MCF 10A (cell line): ENCODE measurements at regions of chr14 and their contacts with region 1.

Region 1: DNA sequence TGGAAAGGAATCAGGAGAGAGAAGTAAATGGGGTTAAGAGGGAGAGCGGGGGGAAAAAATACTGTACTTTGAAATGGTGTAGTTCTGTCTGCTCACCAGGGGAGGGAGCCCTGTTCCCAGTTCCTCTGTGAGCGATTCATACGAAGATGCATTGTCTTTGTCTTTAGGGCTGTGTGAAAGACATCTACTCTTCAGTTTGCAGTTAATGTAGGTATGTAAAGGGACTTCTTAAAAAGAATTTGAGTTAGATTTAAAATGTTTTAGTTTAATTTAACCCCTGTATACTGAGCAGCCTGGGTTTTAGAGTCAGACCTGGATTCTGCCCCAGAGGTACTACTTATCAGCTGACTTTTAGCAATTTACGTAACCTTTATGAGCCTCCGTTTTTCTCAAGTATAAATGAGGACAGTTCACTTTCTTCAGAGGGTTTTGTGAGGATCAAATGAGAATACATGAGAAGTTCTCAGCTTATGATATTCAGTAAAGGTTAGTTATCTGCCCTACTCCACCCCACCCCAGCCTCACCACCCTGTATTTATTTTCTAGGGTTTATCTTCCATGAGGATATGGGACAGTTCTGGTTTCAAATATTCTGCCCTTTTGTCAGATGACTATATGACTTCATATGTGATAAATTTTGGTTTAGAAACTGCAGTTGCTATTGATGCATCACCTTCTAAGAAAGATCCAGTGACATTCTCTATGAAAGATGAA is 82.5 kb upstream of the EVL start:
- DNase-seq: peak; percentile 74
- H3K4me3 Mint-ChIP-seq: no peak overlapping the region
- H3K27ac Mint-ChIP-seq: no peak overlapping the region
- H3K4me1 Mint-ChIP-seq: peaks cover 22% of the 10 kb centered on the region
- H3K27me3 Mint-ChIP-seq: no peaks in the 10 kb centered on the region
- CTCF ChIP-seq: peak; percentile 87

Region 2: DNA sequence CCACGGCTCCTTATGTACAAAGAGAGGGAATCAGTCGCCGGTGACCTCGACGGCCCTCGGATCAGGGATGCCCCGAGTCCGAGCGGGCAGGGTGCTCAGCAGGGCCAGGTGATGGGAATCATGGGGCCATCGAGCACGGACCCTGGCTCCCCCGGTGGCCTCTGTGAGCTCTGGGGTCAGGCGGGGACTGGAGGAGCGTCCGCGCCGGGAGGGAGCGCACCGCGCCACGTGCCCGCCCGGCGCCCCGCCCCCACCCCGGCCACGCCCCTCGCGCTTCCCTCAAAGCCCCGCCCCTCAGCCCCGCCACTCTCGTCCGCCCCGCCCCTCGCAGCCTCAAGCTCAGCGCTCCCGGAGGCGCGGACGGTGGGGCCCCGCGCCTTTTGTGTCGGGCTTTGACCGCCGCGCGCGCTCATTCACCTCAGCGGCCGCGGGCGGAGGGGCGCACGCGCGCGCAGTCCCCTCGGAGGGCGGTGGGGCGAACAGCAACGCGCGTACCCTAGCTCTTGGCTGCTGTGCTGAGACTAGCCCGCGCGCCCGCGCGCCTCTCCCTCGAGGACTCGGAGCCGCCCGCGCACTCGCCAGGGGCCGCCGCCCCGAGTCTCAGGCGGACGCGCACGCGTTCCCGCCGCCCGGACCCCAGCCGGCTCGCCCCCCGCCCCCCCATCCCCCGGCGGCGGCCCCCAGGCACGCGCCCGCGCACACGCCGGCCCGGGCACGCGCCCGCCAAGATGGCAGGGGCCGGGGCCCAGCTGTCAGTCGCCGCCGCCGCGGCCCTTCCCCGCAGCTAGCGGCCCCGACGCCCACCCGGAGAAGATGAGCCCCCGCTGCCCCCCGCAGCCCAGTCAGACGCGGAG is 11.4 kb before region 1 on chr14:
- CTCF ChIA-PET with region 1: interaction called, 4 read pairs
- POLR2A ChIA-PET with region 1: interaction called, 10 read pairs
- intact Hi-C with region 1: no loop called
- DNase-seq: peak; percentile 84
- H3K4me3 Mint-ChIP-seq: peak overlapping the region; percentile 91
- H3K27ac Mint-ChIP-seq: no peak overlapping the region
- H3K4me1 Mint-ChIP-seq: peaks cover 7% of the 10 kb centered on the region
- H3K27me3 Mint-ChIP-seq: no peaks in the 10 kb centered on the region
- CTCF ChIP-seq: no peak

Region 3: DNA sequence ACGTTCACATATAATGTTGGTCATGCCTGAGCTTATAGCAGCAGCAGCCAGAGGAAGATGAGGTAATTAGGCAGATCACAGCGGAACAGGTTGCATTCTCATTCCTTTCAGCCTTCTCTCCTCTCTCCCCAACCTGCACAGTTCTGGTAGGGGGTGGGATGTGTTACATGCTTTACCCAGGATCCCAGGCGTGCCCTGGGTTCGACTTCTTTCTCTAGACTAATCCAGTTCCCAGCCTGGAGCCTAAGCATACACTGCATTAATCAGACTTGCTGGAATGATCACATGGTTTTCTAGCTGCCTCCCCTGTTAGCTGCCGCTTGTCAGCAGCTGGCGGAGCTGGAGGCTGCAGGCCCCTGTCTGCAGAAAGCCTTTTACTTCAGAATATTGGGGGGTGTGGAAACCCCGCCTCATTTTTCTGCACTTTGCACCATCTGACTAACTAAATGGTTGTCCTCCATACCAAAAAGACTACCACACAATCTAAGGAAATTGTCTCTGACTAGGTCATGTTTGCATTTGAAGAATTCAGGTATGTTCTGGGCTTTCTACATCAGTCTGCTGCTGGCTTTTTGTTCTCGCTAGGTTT is 36.6 kb after region 1 on chr14:
- CTCF ChIA-PET with region 1: interaction called, 48 read pairs
- POLR2A ChIA-PET with region 1: no interaction called
- intact Hi-C with region 1: no loop called
- DNase-seq: no peak
- H3K4me3 Mint-ChIP-seq: no peak overlapping the region
- H3K27ac Mint-ChIP-seq: no peak overlapping the region
- H3K4me1 Mint-ChIP-seq: peaks cover 23% of the 10 kb centered on the region
- H3K27me3 Mint-ChIP-seq: no peaks in the 10 kb centered on the region
- CTCF ChIP-seq: no peak

Region 4: DNA sequence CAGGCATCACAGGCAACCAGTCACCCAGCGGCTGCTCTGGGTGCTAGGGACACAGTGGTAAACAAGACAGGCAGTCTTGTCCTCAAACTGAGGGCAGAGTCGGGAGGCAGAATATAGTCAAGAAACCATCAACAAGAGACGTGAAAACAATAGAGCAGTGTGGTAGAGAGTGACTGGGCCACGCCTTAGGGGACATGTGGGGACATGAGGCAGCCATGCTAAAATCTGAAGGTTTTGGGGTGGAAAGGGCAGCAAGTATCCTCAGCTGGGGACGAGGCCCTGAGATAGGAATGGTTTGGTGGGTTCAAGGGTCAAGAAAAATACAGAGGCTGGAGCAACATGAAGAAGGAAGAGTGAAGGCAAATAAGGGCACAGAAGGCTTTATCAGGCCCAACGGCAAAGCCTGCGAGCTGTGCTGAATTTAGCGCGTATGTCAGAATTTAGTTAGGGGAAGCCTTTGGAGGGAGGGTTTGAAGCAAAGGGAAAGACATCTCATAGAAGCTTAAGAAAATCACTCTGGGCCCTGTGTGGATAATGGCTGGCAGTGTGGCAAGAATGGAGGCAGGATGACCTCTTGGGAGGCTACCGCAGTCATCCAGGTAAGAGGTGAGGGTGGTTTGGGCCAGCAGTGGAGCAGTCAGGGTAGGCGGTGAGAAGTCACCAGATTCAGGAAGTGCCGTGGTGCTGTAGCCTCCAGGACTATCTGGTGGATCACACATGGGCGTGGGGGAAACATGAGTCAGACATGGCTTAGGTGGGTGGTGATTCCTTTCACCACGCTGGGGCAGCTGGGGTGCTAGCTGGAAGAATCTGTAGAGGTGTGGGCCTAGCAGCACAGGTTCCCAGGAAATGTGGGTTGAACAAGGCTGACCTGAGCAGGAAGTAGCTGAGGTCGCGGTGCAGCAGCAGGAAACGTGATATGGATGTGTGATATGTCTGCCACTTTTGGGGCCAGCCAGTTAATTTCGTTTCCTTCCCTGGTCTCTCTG is 85.6 kb after region 1 on chr14:
- CTCF ChIA-PET with region 1: interaction called, 21 read pairs
- POLR2A ChIA-PET with region 1: interaction called, 3 read pairs
- intact Hi-C with region 1: loop called (anchors 1 kb)
- DNase-seq: peak; percentile 73
- H3K4me3 Mint-ChIP-seq: no peak overlapping the region
- H3K27ac Mint-ChIP-seq: peak overlapping the region; percentile 78
- H3K4me1 Mint-ChIP-seq: peaks cover 29% of the 10 kb centered on the region
- H3K27me3 Mint-ChIP-seq: no peaks in the 10 kb centered on the region
- CTCF ChIP-seq: no peak

Region 5: GRCh38 chr14:100108042-100108825 is 125.5 kb after region 1 on chr14:
- CTCF ChIA-PET with region 1: interaction called, 89 read pairs
- POLR2A ChIA-PET with region 1: interaction called, 5 read pairs
- intact Hi-C with region 1: loop called (anchors 1 kb)
- DNase-seq: peak; percentile 81
- H3K4me3 Mint-ChIP-seq: peak overlapping the region; percentile 18
- H3K27ac Mint-ChIP-seq: peak overlapping the region; percentile 70
- H3K4me1 Mint-ChIP-seq: peaks cover 41% of the 10 kb centered on the region
- H3K27me3 Mint-ChIP-seq: no peaks in the 10 kb centered on the region
- CTCF ChIP-seq: peak; percentile 89